Astrocyte of the cerebellum (primary cell): ENCODE measurements at regions of chr7 and their contacts with region 1.

Region 1: DNA sequence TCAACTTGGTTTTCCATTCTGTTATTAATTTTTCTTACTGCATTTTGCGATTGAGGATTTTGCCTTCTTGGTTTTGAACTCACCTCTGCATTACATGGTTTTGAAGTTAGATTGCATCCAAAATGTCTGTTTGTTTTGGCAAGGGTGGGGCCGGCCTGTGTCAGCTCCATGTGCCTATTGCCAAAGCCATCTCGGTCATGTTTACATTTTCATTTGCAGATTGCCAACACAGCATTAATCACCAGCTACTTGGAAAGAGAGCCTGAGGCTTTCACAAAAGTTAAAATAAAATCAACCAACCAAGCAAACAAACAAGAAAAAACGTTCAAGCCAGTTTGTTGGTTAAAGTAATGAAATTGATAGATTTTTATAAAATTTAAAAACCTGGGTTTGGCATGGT is 695.8 kb downstream of the TYW1 start:
- DNase-seq: no peak
- H3K4me3 ChIP-seq: no peak overlapping the region
- CTCF ChIP-seq: no peak

Region 2: GRCh38 chr7:67771846-67772605 is 79.6 kb after region 1 on chr7:
- in situ Hi-C with region 1: loop called (anchors 10 kb)
- DNase-seq: no peak
- H3K4me3 ChIP-seq: no peak overlapping the region
- CTCF ChIP-seq: no peak